K562 (cell line): ENCODE measurements at regions of chr18 and their contacts with region 1.

Region 1: DNA sequence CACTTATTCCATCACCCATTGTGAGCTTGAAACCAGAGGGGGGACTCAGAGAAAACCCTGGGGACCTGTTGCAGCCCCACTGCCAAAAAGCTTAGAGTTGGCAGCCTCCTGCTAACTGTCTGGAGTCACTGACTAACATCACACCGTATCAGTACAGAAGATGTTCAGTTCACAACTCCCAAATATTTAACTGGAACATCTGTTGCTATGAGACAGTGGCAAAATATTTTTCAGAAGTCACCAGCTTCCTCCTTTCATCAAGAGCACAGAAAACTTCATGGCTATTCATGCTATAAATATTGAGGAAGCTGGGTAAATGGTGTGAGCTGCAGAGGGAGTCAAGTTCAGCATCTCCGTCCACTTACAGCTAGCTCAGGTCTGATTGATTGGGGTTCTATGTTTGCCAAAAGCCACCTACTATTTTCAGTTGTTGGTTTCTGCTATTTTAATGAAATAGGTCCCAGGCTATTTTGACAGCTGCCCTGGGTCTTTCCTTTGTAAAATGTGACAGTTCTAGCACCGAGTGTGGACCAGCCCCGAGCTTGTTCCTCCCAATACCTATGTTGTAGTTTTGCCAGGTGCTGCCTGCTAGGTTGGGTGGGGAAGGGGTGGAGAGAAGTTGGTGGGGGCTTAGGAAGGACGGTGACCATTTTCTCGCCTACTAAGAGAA is 9.8 kb downstream of the TUBB6 start:
- DNase-seq: peak in 1 of 4 experiments; percentile 5
- ATAC-seq: no peak
- H3K4me3 ChIP-seq: no peak overlapping the region
- H3K27ac ChIP-seq: no peak overlapping the region
- H3K4me1 ChIP-seq: peaks cover 7 to 17% of the 10 kb centered on the region in 2 experiments; a peak in 4 of 5 replicates
- H3K27me3 ChIP-seq: no peaks in the 10 kb centered on the region
- CTCF ChIP-seq: no peak
- EP300 ChIP-seq: no peak
- POLR2A ChIP-seq: no peak
- RAD21 ChIP-seq: no peak

Region 2: DNA sequence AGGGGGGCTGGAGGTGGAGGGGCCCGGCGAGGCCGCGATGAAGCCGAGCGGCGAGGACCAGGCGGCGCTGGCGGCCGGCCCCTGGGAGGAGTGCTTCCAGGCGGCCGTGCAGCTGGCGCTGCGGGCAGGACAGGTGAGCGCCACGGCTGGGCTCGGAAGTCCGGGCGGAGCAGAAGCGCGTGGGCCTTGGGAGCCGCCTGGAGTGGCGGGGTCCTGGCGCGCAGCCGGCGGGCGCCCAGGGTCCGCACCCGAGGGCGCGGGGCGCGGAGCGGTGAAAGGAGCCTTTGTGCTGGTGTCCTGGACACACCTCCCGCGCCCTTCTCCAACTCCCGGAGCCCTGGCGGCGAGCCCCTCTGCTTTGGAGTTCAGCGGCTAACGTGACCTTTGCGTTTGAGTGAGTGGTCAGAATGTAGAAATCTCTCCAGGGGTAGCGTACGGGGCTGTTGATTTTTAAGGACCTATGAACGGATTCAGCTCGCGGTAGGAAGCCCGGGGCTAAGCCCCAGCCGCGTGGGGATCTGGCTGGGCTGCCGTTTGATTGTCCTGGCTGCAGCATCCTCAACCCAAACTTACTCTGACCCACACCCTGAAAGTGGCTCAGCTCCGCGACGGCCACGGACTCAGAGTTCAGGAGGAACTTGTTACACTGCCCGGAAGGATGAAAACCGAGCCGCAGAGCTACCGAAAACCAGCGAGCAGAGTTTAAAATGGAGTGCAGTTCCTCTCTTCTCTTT is 336.0 kb before region 1 on chr18:
- CTCF ChIA-PET with region 1: no interaction called
- POLR2A ChIA-PET with region 1: no interaction called
- in situ Hi-C with region 1: no loop called
- intact Hi-C with region 1: no loop called
- DNase-seq: peak in 1 of 4 experiments; percentile 41
- ATAC-seq: peak; percentile 36
- H3K4me3 ChIP-seq: peak overlapping the region; percentile 73
- H3K27ac ChIP-seq: peak overlapping the region; percentile 66; the same call in 1 of the 3 replicates
- H3K4me1 ChIP-seq: peaks cover 13 to 27% of the 10 kb centered on the region in 2 experiments
- H3K27me3 ChIP-seq: no peaks in the 10 kb centered on the region
- CTCF ChIP-seq: no peak
- EP300 ChIP-seq: no peak
- POLR2A ChIP-seq: no peak; the same call in 1 of the 2 replicates
- RAD21 ChIP-seq: no peak

Region 3: DNA sequence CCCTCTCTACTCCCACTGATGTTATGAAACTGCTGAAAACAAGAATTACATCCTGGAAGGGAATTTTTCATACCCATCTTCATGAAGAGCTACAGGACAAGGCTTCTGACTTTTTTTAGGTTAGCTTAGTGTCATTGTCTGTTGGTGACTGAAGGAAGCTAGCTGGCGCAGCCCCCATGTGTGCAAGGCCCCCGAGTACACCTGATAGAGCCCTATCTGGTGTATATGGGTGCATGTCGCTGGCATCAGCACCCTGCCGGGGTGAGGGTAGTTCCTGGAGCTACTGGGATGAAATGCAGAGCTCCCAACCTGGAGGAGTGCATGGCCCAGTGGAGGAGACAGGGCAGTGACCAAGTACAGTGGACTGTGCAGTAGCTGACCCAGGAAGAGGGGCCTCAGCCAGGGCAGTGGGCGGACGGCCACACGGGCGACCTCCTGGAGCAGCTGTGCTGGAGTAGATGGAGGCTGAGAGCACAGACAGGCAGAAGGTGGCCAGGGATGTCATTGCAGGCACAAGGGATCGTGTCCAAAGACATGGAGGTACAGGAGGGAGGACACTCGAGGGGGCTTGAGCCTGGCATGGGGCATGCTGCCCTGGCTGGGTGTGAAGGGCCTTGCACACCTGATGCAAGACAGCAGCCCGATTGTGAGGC is 324.4 kb before region 1 on chr18:
- CTCF ChIA-PET with region 1: no interaction called
- POLR2A ChIA-PET with region 1: no interaction called
- in situ Hi-C with region 1: no loop called
- intact Hi-C with region 1: no loop called
- DNase-seq: no peak
- ATAC-seq: no peak
- H3K4me3 ChIP-seq: no peak overlapping the region
- H3K27ac ChIP-seq: no peak overlapping the region
- H3K4me1 ChIP-seq: peaks cover 0 to 9% of the 10 kb centered on the region in 2 experiments; a peak in 2 of 5 replicates
- H3K27me3 ChIP-seq: peaks cover 0 to 4% of the 10 kb centered on the region in 2 experiments; a peak in 1 of 5 replicates
- CTCF ChIP-seq: no peak
- EP300 ChIP-seq: no peak
- POLR2A ChIP-seq: no peak
- RAD21 ChIP-seq: no peak

Region 4: GRCh38 chr18:12302391-12303147 is 15.2 kb before region 1 on chr18:
- CTCF ChIA-PET with region 1: no interaction called
- POLR2A ChIA-PET with region 1: interaction called, 19 read pairs
- in situ Hi-C with region 1: no loop called
- intact Hi-C with region 1: no loop called
- DNase-seq: peak; percentile 83 to 92 (median 85)
- ATAC-seq: peak; percentile 78
- H3K4me3 ChIP-seq: no peak overlapping the region
- H3K27ac ChIP-seq: peak overlapping the region; percentile 84
- H3K4me1 ChIP-seq: peaks cover 54 to 59% of the 10 kb centered on the region in 2 experiments
- H3K27me3 ChIP-seq: no peaks in the 10 kb centered on the region
- CTCF ChIP-seq: no peak
- EP300 ChIP-seq: peak; percentile 82
- POLR2A ChIP-seq: no peak
- RAD21 ChIP-seq: no peak